ENCODE measurements at regions of chr6 and their contacts with region 1.

Region 1: GRCh38 chr6:162082520-162082919 is 645.0 kb downstream of the PRKN start:
- DNase-seq: no peak
- H3K4me3 Mint-ChIP-seq: no peak overlapping the region
- H3K27ac Mint-ChIP-seq: no peak overlapping the region
- H3K4me1 Mint-ChIP-seq: no peaks in the 10 kb centered on the region
- H3K27me3 Mint-ChIP-seq: no peaks in the 10 kb centered on the region

Region 2: DNA sequence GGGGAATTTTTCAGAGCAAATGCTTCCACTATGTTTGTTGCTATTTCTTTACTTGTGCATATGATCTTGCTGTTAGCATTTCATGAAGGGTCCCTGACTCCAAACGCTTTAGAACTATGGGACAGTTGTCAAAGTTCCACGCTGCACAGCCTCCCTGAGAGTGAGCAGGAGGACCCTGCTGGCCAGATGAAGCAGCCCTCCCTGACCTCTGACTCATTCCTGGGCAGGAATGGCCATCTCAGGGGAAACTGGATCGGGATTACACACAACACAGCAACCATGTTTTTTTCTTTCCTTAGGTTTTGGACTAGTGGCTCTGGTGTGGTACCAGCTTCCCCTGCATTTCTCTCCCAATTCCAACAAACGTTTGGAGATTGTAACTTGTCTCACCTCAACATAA is 97.8 kb before region 1 on chr6:
- intact Hi-C with region 1: no loop called
- DNase-seq: no peak
- H3K4me3 Mint-ChIP-seq: no peak overlapping the region
- H3K27ac Mint-ChIP-seq: no peak overlapping the region
- H3K4me1 Mint-ChIP-seq: no peaks in the 10 kb centered on the region
- H3K27me3 Mint-ChIP-seq: no peaks in the 10 kb centered on the region

Region 3: GRCh38 chr6:162343936-162344645 is 261.6 kb after region 1 on chr6:
- intact Hi-C with region 1: loop called (anchors 2 kb)
- DNase-seq: no peak
- H3K4me3 Mint-ChIP-seq: no peak overlapping the region
- H3K27ac Mint-ChIP-seq: no peak overlapping the region
- H3K4me1 Mint-ChIP-seq: no peaks in the 10 kb centered on the region
- H3K27me3 Mint-ChIP-seq: no peaks in the 10 kb centered on the region